ENCODE measurements at regions of chr4 and their contacts with region 1.

Region 1: GRCh38 chr4:185183619-185184281 is 20.1 kb downstream of the CFAP97 start:
- DNase-seq: peak; percentile 91
- H3K4me3 Mint-ChIP-seq: no peak overlapping the region
- H3K27ac Mint-ChIP-seq: no peak overlapping the region
- H3K4me1 Mint-ChIP-seq: peaks cover 10% of the 10 kb centered on the region
- H3K27me3 Mint-ChIP-seq: no peaks in the 10 kb centered on the region
- CTCF ChIP-seq: peak; percentile 54

Region 2: GRCh38 chr4:185165605-185166063 is 18.1 kb before region 1 on chr4:
- CTCF ChIA-PET with region 1: interaction called, 32 read pairs
- POLR2A ChIA-PET with region 1: interaction called, 3 read pairs
- intact Hi-C with region 1: no loop called
- DNase-seq: peak; percentile 30
- H3K4me3 Mint-ChIP-seq: no peak overlapping the region
- H3K27ac Mint-ChIP-seq: peak overlapping the region; percentile 32
- H3K4me1 Mint-ChIP-seq: peaks cover 10% of the 10 kb centered on the region
- H3K27me3 Mint-ChIP-seq: no peaks in the 10 kb centered on the region
- CTCF ChIP-seq: no peak

Region 3: DNA sequence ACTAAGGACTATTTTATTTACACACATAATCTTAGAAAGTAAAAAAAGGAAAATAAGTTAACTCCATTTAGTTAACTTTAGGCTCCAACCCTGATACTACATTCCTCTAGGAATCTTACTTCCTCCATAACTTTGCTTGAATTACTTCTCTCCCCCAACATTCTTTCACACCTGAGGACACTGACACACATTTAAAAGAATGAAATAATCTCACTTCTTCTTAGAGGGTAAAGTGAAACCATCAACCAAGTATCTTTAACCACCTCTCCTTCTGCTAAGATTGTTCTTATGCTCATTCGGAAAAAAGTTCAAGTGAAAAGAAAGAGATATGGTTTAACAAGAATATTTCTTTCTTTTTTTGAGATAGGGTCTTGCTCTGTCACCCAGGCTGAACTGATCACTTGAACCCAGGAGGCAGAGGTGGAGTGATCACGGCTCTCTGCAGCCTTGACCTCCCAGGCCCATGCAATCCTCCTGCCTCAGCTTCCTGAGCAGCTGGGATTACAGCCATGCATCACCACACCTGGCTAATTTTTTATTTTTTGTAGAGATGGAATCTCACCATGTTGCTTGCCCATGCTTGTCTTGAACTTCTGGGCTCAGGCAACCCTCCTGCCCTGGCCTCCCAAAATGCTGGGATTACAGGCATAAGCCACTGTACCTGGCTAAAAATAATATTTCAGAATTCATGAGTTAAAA is 12.2 kb before region 1 on chr4:
- CTCF ChIA-PET with region 1: interaction called, 41 read pairs
- POLR2A ChIA-PET with region 1: interaction called, 5 read pairs
- intact Hi-C with region 1: no loop called
- DNase-seq: no peak
- H3K4me3 Mint-ChIP-seq: no peak overlapping the region
- H3K27ac Mint-ChIP-seq: peak overlapping the region; percentile 40
- H3K4me1 Mint-ChIP-seq: peaks cover 5% of the 10 kb centered on the region
- H3K27me3 Mint-ChIP-seq: no peaks in the 10 kb centered on the region
- CTCF ChIP-seq: no peak

Region 4: GRCh38 chr4:185203486-185204237 is 19.9 kb after region 1 on chr4 and contains the start of gene CFAP97:
- CTCF ChIA-PET with region 1: interaction called, 42 read pairs
- POLR2A ChIA-PET with region 1: interaction called, 7 read pairs
- intact Hi-C with region 1: no loop called
- DNase-seq: peak; percentile 86
- H3K4me3 Mint-ChIP-seq: peak within 1 kb of the TSS; percentile 90
- H3K27ac Mint-ChIP-seq: peak within 1 kb of the TSS; percentile 94
- H3K4me1 Mint-ChIP-seq: peaks cover 13% of the 10 kb centered on the region
- H3K27me3 Mint-ChIP-seq: no peaks in the 10 kb centered on the region
- CTCF ChIP-seq: no peak
- total RNA-seq, gene CFAP97: 80.2 and 95.0 TPM in 2 replicates